H1 (cell line): ENCODE measurements at regions of chr16 and their contacts with region 1.

Region 1: GRCh38 chr16:16183562-16183961 is 39.7 kb downstream of the ABCC6 start:
- DNase-seq: peak; percentile 9 to 73
- H3K4me3 ChIP-seq: no peak overlapping the region
- H3K27ac ChIP-seq: no peak overlapping the region
- H3K4me1 ChIP-seq: peaks cover 0 to 5% (median 2%) of the 10 kb centered on the region in 4 experiments; a peak in 2 of 7 replicates
- H3K27me3 ChIP-seq: no peaks in the 10 kb centered on the region
- CTCF ChIP-seq: peak; percentile 20 to 52 (median 48)
- EP300 ChIP-seq: no peak
- POLR2A ChIP-seq: no peak
- RAD21 ChIP-seq: peak in 1 of 2 experiments; percentile 16; a peak in 1 of 4 replicates

Region 2: DNA sequence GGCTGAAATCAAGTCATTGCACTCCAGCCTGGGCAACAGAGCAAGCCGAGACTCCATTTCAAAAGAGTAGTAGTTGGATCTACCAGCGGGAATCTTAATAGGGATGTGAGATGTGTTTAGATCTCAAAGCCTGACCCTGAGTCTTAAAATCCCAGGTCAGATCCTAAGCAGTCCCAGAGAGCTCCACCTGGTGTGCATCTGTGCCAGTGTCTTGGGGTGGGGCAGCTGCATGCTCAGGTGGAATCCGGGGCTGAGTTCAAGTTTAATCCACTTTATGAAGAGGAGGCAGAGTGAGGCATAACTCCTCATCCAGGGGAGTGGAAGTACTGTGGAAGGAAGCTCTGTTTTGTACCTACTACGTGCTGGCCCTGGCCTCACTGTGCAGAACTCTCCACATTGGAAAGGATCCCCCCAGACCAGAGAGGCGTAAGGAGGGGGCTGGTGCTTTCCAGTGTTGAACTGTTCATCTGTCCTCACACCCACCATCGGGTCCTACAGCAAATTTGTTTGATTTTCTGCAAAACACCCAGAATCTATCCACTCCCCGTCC is 38.4 kb before region 1 on chr16:
- CTCF ChIA-PET with region 1: interaction called, 11 read pairs
- POLR2A ChIA-PET with region 1: no interaction called
- DNase-seq: no peak
- H3K4me3 ChIP-seq: no peak overlapping the region
- H3K27ac ChIP-seq: no peak overlapping the region
- H3K4me1 ChIP-seq: peaks cover 0 to 4% (median under 1%) of the 10 kb centered on the region in 4 experiments; a peak in 1 of 7 replicates
- H3K27me3 ChIP-seq: no peaks in the 10 kb centered on the region
- CTCF ChIP-seq: peak in 2 of 3 experiments; percentile 8 to 14; a peak in 2 of 4 replicates
- EP300 ChIP-seq: no peak
- POLR2A ChIP-seq: no peak
- RAD21 ChIP-seq: no peak

Region 3: GRCh38 chr16:16150117-16150877 is 33.3 kb before region 1 on chr16:
- CTCF ChIA-PET with region 1: interaction called, 11 read pairs
- POLR2A ChIA-PET with region 1: no interaction called
- DNase-seq: no peak
- H3K4me3 ChIP-seq: no peak overlapping the region
- H3K27ac ChIP-seq: no peak overlapping the region
- H3K4me1 ChIP-seq: peaks cover 0 to 4% (median under 1%) of the 10 kb centered on the region in 4 experiments; a peak in 1 of 7 replicates
- H3K27me3 ChIP-seq: no peaks in the 10 kb centered on the region
- CTCF ChIP-seq: no peak
- EP300 ChIP-seq: no peak
- POLR2A ChIP-seq: no peak
- RAD21 ChIP-seq: no peak